ENCODE measurements at regions of chr2 and their contacts with region 1.

Region 1: DNA sequence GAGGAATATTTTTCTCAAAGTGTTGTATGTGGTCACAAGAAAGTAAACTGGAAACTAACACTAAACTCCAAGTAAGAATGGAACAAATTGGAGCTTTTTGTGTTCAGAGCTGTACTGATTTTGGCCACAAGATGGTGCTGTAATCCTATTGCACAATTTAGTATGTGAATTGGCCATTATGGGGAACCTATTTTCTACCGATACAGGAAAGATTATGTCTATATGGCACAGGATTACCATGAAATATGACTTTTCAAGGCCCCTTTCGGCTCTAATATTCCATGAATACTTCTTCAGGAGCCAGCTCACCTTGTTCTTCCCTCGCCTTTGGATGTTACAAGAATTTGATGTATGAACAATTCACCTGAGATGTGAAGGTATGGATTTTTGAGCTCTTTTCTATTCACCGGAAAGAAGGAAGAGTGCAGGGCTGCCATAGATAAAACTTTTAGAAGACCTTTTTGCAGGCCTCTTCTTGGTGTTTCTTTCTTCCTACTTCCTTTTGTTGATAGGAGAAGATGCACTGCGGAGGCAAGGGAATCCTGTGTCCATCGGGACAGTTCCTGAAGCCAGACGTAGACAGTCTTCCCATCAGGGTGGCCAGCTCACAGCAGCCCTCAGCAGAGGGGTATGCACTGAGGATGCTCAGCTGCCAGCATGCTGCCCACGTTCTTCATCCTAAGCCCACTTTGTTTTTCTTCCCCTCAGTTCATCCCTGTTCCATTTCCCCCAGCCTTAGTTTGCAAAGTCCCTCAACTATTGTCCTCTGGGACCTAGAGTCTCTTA is 13.3 kb downstream of the MRPL44 start:
- DNase-seq: peak in 1 of 2 experiments; percentile 74
- H3K4me3 ChIP-seq: no peak overlapping the region
- H3K27ac ChIP-seq: no peak overlapping the region
- H3K4me1 ChIP-seq: no peaks in the 10 kb centered on the region
- H3K27me3 ChIP-seq: no peaks in the 10 kb centered on the region
- CTCF ChIP-seq: peak in 2 of 3 experiments; percentile 61 to 83; a peak in 3 of 4 replicates
- EP300 ChIP-seq: no peak
- POLR2A ChIP-seq: no peak
- RAD21 ChIP-seq: peak; percentile 91 to 92

Region 2: DNA sequence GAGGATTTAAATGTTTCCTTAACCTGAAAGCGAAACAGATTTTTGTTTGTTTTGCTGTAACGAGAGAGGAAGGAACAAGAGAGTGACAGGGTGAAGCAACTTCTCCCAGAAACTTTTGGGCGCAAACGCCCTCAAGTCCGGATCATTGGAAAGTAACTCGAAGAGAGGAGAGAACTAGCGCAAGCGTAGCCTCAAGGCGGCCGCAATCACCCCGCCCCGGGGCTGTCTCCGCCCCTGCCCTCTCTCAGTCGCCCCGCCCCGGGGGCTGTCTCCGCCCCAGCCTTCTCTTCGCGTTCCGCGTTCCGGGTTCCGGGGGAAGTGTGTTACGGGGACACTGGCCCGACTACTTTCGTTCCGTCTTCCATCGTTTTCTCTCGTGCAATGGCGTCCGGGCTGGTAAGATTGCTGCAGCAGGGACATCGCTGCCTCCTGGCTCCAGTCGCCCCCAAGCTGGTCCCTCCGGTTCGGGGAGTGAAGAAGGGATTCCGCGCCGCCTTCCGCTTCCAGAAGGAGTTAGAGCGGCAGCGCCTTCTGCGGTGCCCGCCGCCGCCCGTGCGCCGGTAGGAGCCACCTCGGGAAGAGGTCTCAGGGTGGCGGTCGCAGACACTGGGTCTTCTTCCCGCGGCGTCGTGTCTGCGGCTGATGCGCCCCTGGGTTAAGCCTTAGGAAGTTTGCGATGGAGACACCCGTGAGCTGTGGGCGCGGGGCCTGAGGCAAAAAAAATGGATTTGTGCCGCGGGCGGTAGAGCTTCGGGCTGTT is 13.3 kb before region 1 on chr2 and contains the start of gene MRPL44:
- CTCF ChIA-PET with region 1: interaction called, 47 read pairs
- POLR2A ChIA-PET with region 1: interaction called, 18 read pairs
- DNase-seq: peak; percentile 75 to 99
- H3K4me3 ChIP-seq: peak within 1 kb of the TSS; percentile 89 to 93 (median 91)
- H3K27ac ChIP-seq: peak within 1 kb of the TSS; percentile 90
- H3K4me1 ChIP-seq: peaks cover 3 to 13% (median 5%) of the 10 kb centered on the region in 4 experiments; a peak in 4 of 7 replicates
- H3K27me3 ChIP-seq: no peaks in the 10 kb centered on the region
- CTCF ChIP-seq: no peak
- EP300 ChIP-seq: peak; percentile 6 to 92
- POLR2A ChIP-seq: peak; percentile 90 to 92
- RAD21 ChIP-seq: 0 out of 4 replicates have a peak, but pooled peaks of 1 of the 2 experiments have one; percentile 24
- total RNA-seq, gene MRPL44: 50.4 and 53.2 TPM in 2 replicates

Region 3: DNA sequence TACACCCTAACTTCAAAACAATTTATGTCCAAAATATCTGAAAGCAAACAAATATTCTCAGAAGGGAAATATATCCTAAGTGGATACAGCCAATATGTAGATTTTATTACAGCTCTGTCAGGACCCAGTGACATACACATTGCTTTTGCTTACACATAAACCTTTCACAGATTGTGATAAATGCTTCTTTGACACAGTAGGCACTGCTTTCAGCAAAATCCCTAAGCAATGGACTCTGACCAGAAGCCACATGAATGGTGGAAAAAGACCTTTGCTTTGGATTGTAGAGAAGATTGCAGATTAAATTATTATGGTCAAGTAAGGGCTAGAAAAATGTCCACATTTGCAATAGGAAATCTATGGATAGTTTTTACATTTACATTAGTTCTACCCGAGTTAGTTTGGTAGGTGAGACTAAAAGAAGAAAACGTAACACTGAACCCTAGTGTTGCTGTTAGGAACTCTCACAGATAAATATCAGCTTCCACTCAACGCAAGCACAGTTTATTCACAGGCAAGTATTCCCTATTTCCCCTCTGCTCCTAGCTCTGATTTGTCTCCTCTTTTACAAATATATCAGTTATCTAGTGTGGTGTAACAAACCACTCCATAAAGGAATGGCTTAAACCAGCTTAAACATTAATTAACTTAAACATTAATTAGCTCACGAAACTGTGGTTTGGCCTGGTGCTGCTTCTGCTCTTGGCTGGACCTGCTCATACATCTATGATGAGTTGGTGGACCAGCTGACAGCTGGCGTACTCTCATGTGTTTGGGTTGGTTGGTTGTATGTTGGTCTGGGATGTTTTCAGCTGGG is 92.2 kb after region 1 on chr2:
- CTCF ChIA-PET with region 1: interaction called, 52 read pairs
- POLR2A ChIA-PET with region 1: no interaction called
- DNase-seq: no peak
- H3K4me3 ChIP-seq: no peak overlapping the region
- H3K27ac ChIP-seq: no peak overlapping the region
- H3K4me1 ChIP-seq: no peaks in the 10 kb centered on the region
- H3K27me3 ChIP-seq: no peaks in the 10 kb centered on the region
- CTCF ChIP-seq: peak in 2 of 3 experiments; percentile 30 to 40; a peak in 2 of 4 replicates
- EP300 ChIP-seq: no peak
- POLR2A ChIP-seq: no peak
- RAD21 ChIP-seq: peak; percentile 62 to 64

Region 4: DNA sequence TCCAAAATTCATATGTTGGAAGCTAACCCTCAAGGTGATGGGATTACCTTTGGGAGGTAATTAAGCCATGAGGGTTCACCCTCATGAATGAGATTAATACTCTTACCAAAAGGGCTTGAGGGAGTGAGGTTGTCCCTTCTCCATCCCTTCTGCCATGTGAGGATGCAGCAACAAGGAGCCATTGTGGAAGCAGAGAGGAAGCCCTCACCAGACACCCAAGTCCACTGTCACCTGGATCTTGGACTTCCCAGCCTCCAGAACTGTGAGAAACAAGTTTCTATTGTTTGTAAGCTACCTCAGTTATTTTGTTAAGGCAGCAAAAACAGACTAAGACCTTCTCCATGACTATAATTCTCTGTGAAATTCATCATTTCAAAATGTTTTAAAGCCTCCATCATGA is 305.7 kb after region 1 on chr2:
- CTCF ChIA-PET with region 1: interaction called, 265 read pairs
- POLR2A ChIA-PET with region 1: no interaction called
- DNase-seq: no peak
- H3K4me3 ChIP-seq: no peak overlapping the region
- H3K27ac ChIP-seq: no peak overlapping the region
- H3K4me1 ChIP-seq: no peaks in the 10 kb centered on the region
- H3K27me3 ChIP-seq: no peaks in the 10 kb centered on the region
- CTCF ChIP-seq: no peak
- EP300 ChIP-seq: no peak
- POLR2A ChIP-seq: no peak
- RAD21 ChIP-seq: no peak

Region 5: GRCh38 chr2:224319455-224320149 is 349.1 kb after region 1 on chr2:
- CTCF ChIA-PET with region 1: interaction called, 10 read pairs
- POLR2A ChIA-PET with region 1: no interaction called
- DNase-seq: no peak
- H3K4me3 ChIP-seq: no peak overlapping the region
- H3K27ac ChIP-seq: no peak overlapping the region
- H3K4me1 ChIP-seq: peaks cover 0 to 4% (median 2%) of the 10 kb centered on the region in 4 experiments; a peak in 4 of 7 replicates
- H3K27me3 ChIP-seq: no peaks in the 10 kb centered on the region; a peak in 1 of 7 replicates
- CTCF ChIP-seq: no peak
- EP300 ChIP-seq: no peak
- POLR2A ChIP-seq: no peak
- RAD21 ChIP-seq: no peak

Measured in H1 (cell line).